ENCODE measurements at regions of chr15 and their contacts with region 1.

Region 1: GRCh38 chr15:78108299-78109084 is 16.1 kb downstream of the SH2D7 start:
- DNase-seq: peak; percentile 87
- ATAC-seq: peak; percentile 92
- H3K4me3 ChIP-seq: no peak overlapping the region
- H3K4me3 Mint-ChIP-seq: no peak overlapping the region
- H3K27ac ChIP-seq: no peak overlapping the region
- H3K27ac Mint-ChIP-seq: no peak overlapping the region
- H3K4me1 ChIP-seq: peaks cover 4 to 8% of the 10 kb centered on the region in 2 donors
- H3K4me1 Mint-ChIP-seq: peaks cover 4% of the 10 kb centered on the region
- H3K27me3 ChIP-seq: no peaks in the 10 kb centered on the region
- H3K27me3 Mint-ChIP-seq: no peaks in the 10 kb centered on the region
- CTCF ChIP-seq: peak; percentile 87

Region 2: DNA sequence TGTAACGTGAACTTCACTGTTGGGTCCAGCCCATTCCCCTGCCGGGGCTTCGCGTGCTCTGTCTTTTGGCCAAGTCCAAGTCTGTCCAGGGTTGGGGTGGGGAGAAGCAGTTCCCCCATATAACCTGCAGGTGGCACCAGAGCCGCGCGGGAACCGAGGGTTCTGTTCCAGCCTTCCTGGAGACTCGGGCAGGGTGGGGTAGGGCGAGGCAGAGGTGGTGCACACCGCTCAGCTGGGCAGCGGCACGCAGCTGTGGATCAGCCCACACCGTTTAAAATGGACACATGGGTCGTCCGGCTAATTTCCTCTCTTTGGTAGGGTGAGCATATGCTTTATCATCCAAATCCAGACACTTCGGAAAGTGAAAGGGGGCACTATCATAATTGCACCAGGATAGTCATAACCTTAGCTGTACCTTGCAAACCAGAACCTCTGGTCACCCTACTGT is 149.0 kb before region 1 on chr15:
- CTCF ChIA-PET with region 1: interaction called, 236 read pairs
- POLR2A ChIA-PET with region 1: no interaction called
- intact Hi-C with region 1: loop called (anchors 1 kb)
- DNase-seq: peak; percentile 77
- ATAC-seq: peak; percentile 100
- H3K4me3 ChIP-seq: peak overlapping the region in 2 of 5 experiments; percentile 23 to 36
- H3K4me3 Mint-ChIP-seq: peak overlapping the region; percentile 49
- H3K27ac ChIP-seq: no peak overlapping the region
- H3K27ac Mint-ChIP-seq: no peak overlapping the region
- H3K4me1 ChIP-seq: peaks cover 3 to 6% of the 10 kb centered on the region in 2 donors
- H3K4me1 Mint-ChIP-seq: peaks cover 7% of the 10 kb centered on the region
- H3K27me3 ChIP-seq: peaks cover 0 to 2% (median 0%) of the 10 kb centered on the region in 4 experiments
- H3K27me3 Mint-ChIP-seq: peaks cover 18% of the 10 kb centered on the region
- CTCF ChIP-seq: peak; percentile 96

Region 3: GRCh38 chr15:77986891-77987764 is 121.4 kb before region 1 on chr15:
- CTCF ChIA-PET with region 1: interaction called, 19 read pairs
- POLR2A ChIA-PET with region 1: no interaction called
- intact Hi-C with region 1: no loop called
- DNase-seq: no peak
- ATAC-seq: no peak
- H3K4me3 ChIP-seq: no peak overlapping the region
- H3K4me3 Mint-ChIP-seq: no peak overlapping the region
- H3K27ac ChIP-seq: no peak overlapping the region
- H3K27ac Mint-ChIP-seq: no peak overlapping the region
- H3K4me1 ChIP-seq: peaks cover 15 to 17% of the 10 kb centered on the region in 2 donors
- H3K4me1 Mint-ChIP-seq: peaks cover 18% of the 10 kb centered on the region
- H3K27me3 ChIP-seq: no peaks in the 10 kb centered on the region
- H3K27me3 Mint-ChIP-seq: peaks cover 8% of the 10 kb centered on the region
- CTCF ChIP-seq: no peak

Region 4: DNA sequence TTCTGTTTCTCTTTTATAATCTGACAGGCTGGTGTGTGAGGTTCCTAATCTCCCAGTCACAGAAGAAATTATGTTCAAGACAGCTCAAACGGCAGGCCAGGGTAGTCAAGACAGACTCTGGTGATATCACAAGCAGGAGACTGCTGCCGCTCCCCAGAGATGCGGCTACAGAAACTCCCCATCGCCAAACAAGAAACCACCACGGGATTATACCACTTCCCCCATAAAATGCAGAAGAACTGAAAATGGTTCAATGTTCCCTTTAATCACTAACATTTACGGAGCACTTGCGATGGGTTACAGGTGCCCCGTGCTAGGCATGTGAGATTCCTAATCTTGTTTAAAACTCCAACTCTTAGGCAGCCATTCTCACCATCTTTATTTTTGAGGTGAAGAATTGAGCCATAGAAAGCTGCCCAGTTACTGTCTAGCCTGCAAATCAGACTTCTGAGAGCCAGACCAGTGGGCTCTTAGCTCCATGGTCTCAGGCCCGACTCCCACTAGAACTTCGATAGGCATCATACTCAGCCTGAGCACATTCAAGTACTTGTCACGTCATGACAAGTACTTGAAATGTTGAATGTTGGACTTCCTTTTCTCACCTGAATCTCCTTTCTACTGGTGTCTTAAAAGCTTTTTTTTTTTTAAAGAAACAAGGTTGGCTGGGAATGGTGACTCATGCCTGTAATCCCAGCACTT is 89.4 kb before region 1 on chr15:
- CTCF ChIA-PET with region 1: interaction called, 17 read pairs
- POLR2A ChIA-PET with region 1: no interaction called
- intact Hi-C with region 1: no loop called
- DNase-seq: peak; percentile 67
- ATAC-seq: peak; percentile 93
- H3K4me3 ChIP-seq: no peak overlapping the region
- H3K4me3 Mint-ChIP-seq: peak overlapping the region; percentile 38
- H3K27ac ChIP-seq: peak overlapping the region in 1 of 2 donors; percentile 31
- H3K27ac Mint-ChIP-seq: peak overlapping the region; percentile 44
- H3K4me1 ChIP-seq: peaks cover 10 to 11% of the 10 kb centered on the region in 2 donors
- H3K4me1 Mint-ChIP-seq: peaks cover 12% of the 10 kb centered on the region
- H3K27me3 ChIP-seq: no peaks in the 10 kb centered on the region
- H3K27me3 Mint-ChIP-seq: no peaks in the 10 kb centered on the region
- CTCF ChIP-seq: no peak

Region 5: DNA sequence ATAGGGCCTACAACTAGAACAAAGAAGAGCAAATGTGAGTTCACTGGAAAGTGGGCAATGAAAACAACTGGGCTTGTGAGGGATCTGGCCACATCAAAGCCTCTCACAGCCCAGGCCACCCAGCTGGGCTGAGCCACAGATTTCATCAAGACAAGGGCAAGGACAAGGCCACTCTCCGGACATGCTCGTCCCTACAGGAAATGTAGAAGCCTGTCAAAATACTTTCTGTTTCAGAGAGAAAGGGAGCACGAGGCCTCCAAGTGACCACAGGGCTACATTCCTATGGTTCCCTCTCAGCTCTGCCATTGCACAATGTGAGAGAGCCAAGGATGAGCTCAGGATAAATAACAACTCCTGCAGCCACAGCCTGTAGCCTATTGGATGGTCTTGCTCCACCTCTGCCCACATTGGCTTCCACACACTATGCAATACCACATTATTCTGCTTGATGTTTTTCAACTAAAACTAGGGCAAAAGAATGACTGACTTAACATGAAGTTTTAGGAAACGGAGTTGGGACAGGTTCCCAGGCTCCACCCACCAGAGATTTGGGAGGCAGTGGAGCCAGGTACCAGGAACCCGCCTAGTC is 43.1 kb before region 1 on chr15:
- CTCF ChIA-PET with region 1: interaction called, 16 read pairs
- POLR2A ChIA-PET with region 1: no interaction called
- intact Hi-C with region 1: no loop called
- DNase-seq: no peak
- ATAC-seq: no peak
- H3K4me3 ChIP-seq: no peak overlapping the region
- H3K4me3 Mint-ChIP-seq: peak overlapping the region; percentile 52
- H3K27ac ChIP-seq: no peak overlapping the region
- H3K27ac Mint-ChIP-seq: no peak overlapping the region
- H3K4me1 ChIP-seq: peaks cover 61 to 70% of the 10 kb centered on the region in 2 donors
- H3K4me1 Mint-ChIP-seq: peaks cover 12% of the 10 kb centered on the region
- H3K27me3 ChIP-seq: peaks cover 0 to 8% (median 0%) of the 10 kb centered on the region in 4 experiments
- H3K27me3 Mint-ChIP-seq: no peaks in the 10 kb centered on the region
- CTCF ChIP-seq: no peak

Region 6: GRCh38 chr15:78093242-78094020 is 15.1 kb before region 1 on chr15:
- CTCF ChIA-PET with region 1: interaction called, 49 read pairs
- POLR2A ChIA-PET with region 1: no interaction called
- intact Hi-C with region 1: no loop called
- DNase-seq: no peak
- ATAC-seq: no peak
- H3K4me3 ChIP-seq: no peak overlapping the region
- H3K4me3 Mint-ChIP-seq: no peak overlapping the region
- H3K27ac ChIP-seq: no peak overlapping the region
- H3K27ac Mint-ChIP-seq: no peak overlapping the region
- H3K4me1 ChIP-seq: peaks cover 0 to under 1% of the 10 kb centered on the region in 2 donors
- H3K4me1 Mint-ChIP-seq: peaks cover 5% of the 10 kb centered on the region
- H3K27me3 ChIP-seq: peaks cover 0 to 4% (median 0%) of the 10 kb centered on the region in 4 experiments
- H3K27me3 Mint-ChIP-seq: peaks cover 8% of the 10 kb centered on the region
- CTCF ChIP-seq: no peak

Region 7: DNA sequence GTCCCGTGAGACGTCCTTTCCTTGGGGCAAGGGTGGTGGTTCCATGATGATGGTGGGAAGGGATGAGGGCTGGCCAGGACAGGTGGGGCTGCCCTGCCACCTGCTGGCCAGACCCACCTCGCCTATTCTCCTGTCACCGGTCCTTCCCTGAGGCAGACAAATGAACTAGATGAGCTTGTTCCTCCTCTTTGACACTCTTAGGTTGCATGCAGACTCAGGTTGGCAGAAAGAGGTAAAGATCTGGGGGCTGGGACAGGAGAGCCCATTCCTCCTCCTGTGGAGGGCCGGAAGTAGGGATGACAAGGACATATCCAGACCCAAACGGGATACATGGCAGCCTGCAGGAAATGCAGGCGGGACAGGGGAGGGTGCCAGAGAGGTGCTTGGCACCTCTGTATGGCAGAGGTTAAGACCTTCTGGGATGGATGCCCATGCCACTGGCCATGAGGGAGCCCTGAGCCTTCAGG is 87.3 kb after region 1 on chr15:
- CTCF ChIA-PET with region 1: interaction called, 394 read pairs
- POLR2A ChIA-PET with region 1: no interaction called
- intact Hi-C with region 1: loop called (anchors 1 kb)
- DNase-seq: peak; percentile 79
- ATAC-seq: peak; percentile 98
- H3K4me3 ChIP-seq: no peak overlapping the region
- H3K4me3 Mint-ChIP-seq: no peak overlapping the region
- H3K27ac ChIP-seq: no peak overlapping the region
- H3K27ac Mint-ChIP-seq: no peak overlapping the region
- H3K4me1 ChIP-seq: no peaks in the 10 kb centered on the region
- H3K4me1 Mint-ChIP-seq: peaks cover 2% of the 10 kb centered on the region
- H3K27me3 ChIP-seq: no peaks in the 10 kb centered on the region
- H3K27me3 Mint-ChIP-seq: no peaks in the 10 kb centered on the region
- CTCF ChIP-seq: peak; percentile 79

Measured in B cell (primary cell).